ENCODE measurements at regions of chr10 and their contacts with region 1.

Region 1: DNA sequence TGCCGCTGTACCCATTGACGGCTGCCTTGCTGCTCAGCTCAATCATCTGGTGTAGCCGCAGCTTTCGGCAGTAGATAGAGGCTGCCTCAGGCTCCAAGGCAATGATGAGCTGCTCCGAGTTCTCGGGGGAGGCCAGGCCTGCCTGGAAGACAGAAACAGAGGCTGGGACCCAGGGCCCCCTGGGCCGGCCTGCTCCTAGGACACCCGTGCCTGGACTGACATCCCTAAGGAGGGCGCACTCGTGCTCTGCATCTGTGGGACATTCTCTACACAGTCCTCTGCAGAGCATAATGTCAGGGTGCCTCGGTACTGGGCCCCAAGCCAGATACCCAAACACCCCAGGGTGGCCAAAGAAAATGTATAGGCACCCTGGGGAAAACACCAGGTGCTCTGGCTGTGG is 58.5 kb downstream of the HSPA12A start:
- DNase-seq: no peak
- ATAC-seq: no peak
- H3K4me3 ChIP-seq: no peak overlapping the region
- H3K27ac ChIP-seq: no peak overlapping the region
- H3K4me1 ChIP-seq: no peaks in the 10 kb centered on the region
- H3K27me3 ChIP-seq: no peaks in the 10 kb centered on the region
- CTCF ChIP-seq: no peak

Region 2: DNA sequence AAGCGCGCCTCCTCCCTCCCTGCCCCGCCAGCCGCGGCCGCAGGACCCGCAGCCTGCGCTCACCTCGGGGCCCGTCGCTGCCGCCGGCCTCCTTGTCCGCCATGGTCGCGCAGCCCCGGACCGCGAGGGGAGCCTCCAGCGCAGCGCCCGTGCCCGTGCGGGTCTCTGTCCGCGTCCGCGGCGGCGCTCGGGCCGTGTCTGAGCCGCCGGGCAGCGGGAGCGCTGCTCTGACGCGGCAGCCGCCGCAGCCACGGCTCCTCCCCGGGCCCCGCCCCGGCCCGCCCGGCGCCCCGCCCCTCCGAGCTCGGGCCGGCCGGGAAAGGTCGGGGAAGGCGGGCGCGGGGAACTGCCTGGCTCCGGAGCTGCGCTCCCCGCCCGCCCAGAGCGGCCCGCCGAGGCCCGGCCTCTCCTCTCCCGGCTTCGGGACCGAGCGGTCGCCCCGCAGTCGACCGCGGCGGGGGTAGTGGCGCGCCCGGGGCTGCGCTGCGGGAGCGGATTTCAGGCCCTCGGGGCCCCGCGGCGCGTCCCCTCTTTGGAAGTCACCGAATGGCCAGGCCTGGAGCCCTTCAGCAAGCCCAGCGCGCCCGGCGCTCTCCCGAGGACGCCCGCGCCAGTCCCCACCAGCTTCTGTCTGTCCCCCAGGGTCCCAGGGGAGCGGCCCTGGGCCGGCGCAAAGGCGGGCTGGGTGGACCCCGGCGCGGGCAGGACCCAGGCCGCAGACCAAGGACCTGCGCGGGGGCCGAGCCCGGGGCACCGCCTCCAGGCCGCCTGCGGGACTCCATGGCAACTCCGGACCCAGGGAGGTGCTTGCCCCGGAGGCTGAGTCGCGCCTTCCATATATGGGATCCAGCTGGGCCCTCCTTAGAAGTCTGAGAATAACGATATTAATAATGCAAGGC is 58.8 kb after region 1 on chr10 and contains the start of gene HSPA12A:
- intact Hi-C with region 1: loop called in 1 of 2 experiments (anchors 5 kb)
- DNase-seq: peak; percentile 83 to 87
- ATAC-seq: peak; percentile 88 to 90 (median 90)
- H3K4me3 ChIP-seq: peak within 1 kb of the TSS; percentile 89
- H3K27ac ChIP-seq: peak within 1 kb of the TSS; percentile 97
- H3K4me1 ChIP-seq: no peaks in the 10 kb centered on the region
- H3K27me3 ChIP-seq: peaks cover 0 to 6% (median 0%) of the 10 kb centered on the region in 3 donors
- CTCF ChIP-seq: peak; percentile 4
- total RNA-seq, gene HSPA12A: 7.0 to 11.4 (median 8.9) TPM

Region 3: GRCh38 chr10:116787893-116788665 is 104.3 kb after region 1 on chr10:
- intact Hi-C with region 1: loop called (anchors 1 to 2 kb)
- DNase-seq: peak; percentile 81 to 87
- ATAC-seq: peak; percentile 79 to 94 (median 80)
- H3K4me3 ChIP-seq: peak overlapping the region; percentile 15
- H3K27ac ChIP-seq: no peak overlapping the region
- H3K4me1 ChIP-seq: peaks cover 6% of the 10 kb centered on the region
- H3K27me3 ChIP-seq: peaks cover 0 to 2% (median 0%) of the 10 kb centered on the region in 3 donors
- CTCF ChIP-seq: peak; percentile 100

Region 4: DNA sequence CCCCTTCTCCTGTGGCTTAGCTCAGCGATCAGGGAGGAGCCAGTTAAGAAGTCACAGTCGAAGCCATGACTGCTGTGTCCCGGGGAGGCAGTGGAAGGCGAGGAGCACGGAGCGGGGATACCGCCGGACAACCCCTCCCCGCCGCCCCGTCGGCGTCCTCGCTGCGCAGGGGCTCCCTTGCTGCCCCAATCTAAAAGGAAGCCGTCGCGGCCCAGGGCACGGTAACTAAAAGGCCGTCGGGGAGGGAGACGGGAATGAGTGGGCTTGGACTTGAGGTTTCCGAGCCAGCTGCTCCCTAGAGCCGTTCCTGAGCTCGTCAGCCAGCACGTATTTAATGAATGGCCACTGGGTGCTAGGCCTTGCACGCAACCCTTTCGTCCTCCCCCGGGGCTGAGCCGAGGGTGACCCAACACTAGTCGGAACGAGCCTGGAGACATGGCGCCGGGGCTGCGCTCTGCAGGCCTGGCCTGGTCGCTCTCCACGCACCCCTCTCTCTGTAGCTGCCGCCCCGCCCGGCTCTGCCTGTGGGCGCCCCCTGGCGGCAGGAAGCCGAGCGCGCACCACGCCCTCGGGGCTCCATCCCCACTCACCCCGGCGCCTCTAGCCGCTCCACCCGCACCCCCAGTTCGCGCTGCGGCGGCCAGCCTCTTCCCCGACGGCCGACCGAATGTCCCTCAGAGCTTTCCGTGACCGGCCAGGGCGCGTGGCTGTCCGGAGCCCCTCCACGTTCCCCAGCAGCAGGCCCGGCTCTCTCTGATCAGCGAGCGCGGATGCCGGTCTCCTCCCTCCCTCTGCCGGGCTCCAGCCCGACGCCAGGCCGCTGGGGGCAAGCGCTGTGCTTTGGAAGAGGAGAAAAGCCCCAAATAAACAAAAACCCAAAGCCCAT is 484.2 kb after region 1 on chr10:
- intact Hi-C with region 1: loop called (anchors 5 to 10 kb)
- DNase-seq: peak; percentile 62 to 76
- ATAC-seq: peak; percentile 71 to 87 (median 78)
- H3K4me3 ChIP-seq: peak overlapping the region; percentile 25
- H3K27ac ChIP-seq: no peak overlapping the region
- H3K4me1 ChIP-seq: peaks cover 6% of the 10 kb centered on the region
- H3K27me3 ChIP-seq: peaks cover 10 to 97% (median 37%) of the 10 kb centered on the region in 3 donors
- CTCF ChIP-seq: peak; percentile 69